ENCODE measurements at regions of chr1 and their contacts with region 1.

Region 1: GRCh38 chr1:33460947-33461629 is 11.4 kb upstream of the ZSCAN20 start:
- DNase-seq: peak; percentile 67
- ATAC-seq: peak; percentile 86
- H3K4me3 ChIP-seq: peak overlapping the region; percentile 49; the same call in 1 of the 2 replicates
- H3K27ac ChIP-seq: peak overlapping the region; percentile 73
- H3K4me1 ChIP-seq: peaks cover 51% of the 10 kb centered on the region
- H3K27me3 ChIP-seq: no peaks in the 10 kb centered on the region
- CTCF ChIP-seq: no peak
- EP300 ChIP-seq: peak; percentile 76 to 85; a peak in 3 of 4 replicates
- POLR2A ChIP-seq: no peak
- RAD21 ChIP-seq: no peak

Region 2: GRCh38 chr1:33120436-33121231 is 340.5 kb before region 1 on chr1:
- CTCF ChIA-PET with region 1: no interaction called
- POLR2A ChIA-PET with region 1: no interaction called
- RAD21 ChIA-PET with region 1: no interaction called
- SMC1A ChIA-PET with region 1: no interaction called
- in situ Hi-C with region 1: no loop called
- intact Hi-C with region 1: no loop called
- DNase-seq: no peak
- ATAC-seq: peak; percentile 93
- H3K4me3 ChIP-seq: no peak overlapping the region
- H3K27ac ChIP-seq: peak overlapping the region; percentile 69
- H3K4me1 ChIP-seq: peaks cover 10% of the 10 kb centered on the region
- H3K27me3 ChIP-seq: no peaks in the 10 kb centered on the region
- CTCF ChIP-seq: no peak
- EP300 ChIP-seq: no peak
- POLR2A ChIP-seq: no peak
- RAD21 ChIP-seq: no peak

Region 3: GRCh38 chr1:33349778-33350610 is 111.1 kb before region 1 on chr1:
- CTCF ChIA-PET with region 1: interaction called, 7 read pairs
- POLR2A ChIA-PET with region 1: interaction called, 10 read pairs
- RAD21 ChIA-PET with region 1: no interaction called
- SMC1A ChIA-PET with region 1: no interaction called
- in situ Hi-C with region 1: no loop called
- intact Hi-C with region 1: loop called (anchors 2 kb)
- DNase-seq: no peak
- ATAC-seq: peak; percentile 87
- H3K4me3 ChIP-seq: peak overlapping the region; percentile 75
- H3K27ac ChIP-seq: peak overlapping the region; percentile 92
- H3K4me1 ChIP-seq: peaks cover 18% of the 10 kb centered on the region
- H3K27me3 ChIP-seq: no peaks in the 10 kb centered on the region
- CTCF ChIP-seq: no peak
- EP300 ChIP-seq: no peak
- POLR2A ChIP-seq: peak; percentile 93
- RAD21 ChIP-seq: no peak